Activated naive CD4-positive, alpha-beta T cell treated with anti-CD3 and anti-CD28 coated beads, Interleukin-2, amount 10 ng/mL, durations not matched to agents 7 days and 5 days (primary cell): ENCODE measurements at regions of chr4 and their contacts with region 1.

Region 1: GRCh38 chr4:15956179-15956850 is 6.7 kb downstream of the FGFBP2 start:
- DNase-seq: peak; percentile 90
- H3K4me3 Mint-ChIP-seq: no peak overlapping the region
- H3K27ac Mint-ChIP-seq: no peak overlapping the region
- H3K4me1 Mint-ChIP-seq: peaks cover 3% of the 10 kb centered on the region
- H3K27me3 Mint-ChIP-seq: peaks cover 18% of the 10 kb centered on the region

Region 2: GRCh38 chr4:15231265-15232091 is 724.8 kb before region 1 on chr4:
- CTCF ChIA-PET with region 1: interaction called, 10 read pairs
- DNase-seq: peak; percentile 83
- H3K4me3 Mint-ChIP-seq: no peak overlapping the region
- H3K27ac Mint-ChIP-seq: no peak overlapping the region
- H3K4me1 Mint-ChIP-seq: peaks cover 33% of the 10 kb centered on the region
- H3K27me3 Mint-ChIP-seq: no peaks in the 10 kb centered on the region

Region 3: GRCh38 chr4:15479089-15479912 is 477.0 kb before region 1 on chr4:
- CTCF ChIA-PET with region 1: interaction called, 13 read pairs
- DNase-seq: no peak
- H3K4me3 Mint-ChIP-seq: no peak overlapping the region
- H3K27ac Mint-ChIP-seq: no peak overlapping the region
- H3K4me1 Mint-ChIP-seq: no peaks in the 10 kb centered on the region
- H3K27me3 Mint-ChIP-seq: peaks cover 3% of the 10 kb centered on the region

Region 4: GRCh38 chr4:15649914-15650545 is 306.3 kb before region 1 on chr4:
- CTCF ChIA-PET with region 1: interaction called, 13 read pairs
- DNase-seq: peak; percentile 75
- H3K4me3 Mint-ChIP-seq: no peak overlapping the region
- H3K27ac Mint-ChIP-seq: peak overlapping the region; percentile 24
- H3K4me1 Mint-ChIP-seq: peaks cover 59% of the 10 kb centered on the region
- H3K27me3 Mint-ChIP-seq: no peaks in the 10 kb centered on the region

Region 5: GRCh38 chr4:15729910-15730533 is 226.3 kb before region 1 on chr4:
- CTCF ChIA-PET with region 1: interaction called, 12 read pairs
- DNase-seq: peak; percentile 46
- H3K4me3 Mint-ChIP-seq: no peak overlapping the region
- H3K27ac Mint-ChIP-seq: no peak overlapping the region
- H3K4me1 Mint-ChIP-seq: peaks cover 30% of the 10 kb centered on the region
- H3K27me3 Mint-ChIP-seq: peaks cover under 1% of the 10 kb centered on the region

Region 6: GRCh38 chr4:15805583-15806517 is 150.5 kb before region 1 on chr4:
- CTCF ChIA-PET with region 1: interaction called, 10 read pairs
- DNase-seq: peak; percentile 55
- H3K4me3 Mint-ChIP-seq: no peak overlapping the region
- H3K27ac Mint-ChIP-seq: no peak overlapping the region
- H3K4me1 Mint-ChIP-seq: peaks cover 49% of the 10 kb centered on the region
- H3K27me3 Mint-ChIP-seq: no peaks in the 10 kb centered on the region

Region 7: DNA sequence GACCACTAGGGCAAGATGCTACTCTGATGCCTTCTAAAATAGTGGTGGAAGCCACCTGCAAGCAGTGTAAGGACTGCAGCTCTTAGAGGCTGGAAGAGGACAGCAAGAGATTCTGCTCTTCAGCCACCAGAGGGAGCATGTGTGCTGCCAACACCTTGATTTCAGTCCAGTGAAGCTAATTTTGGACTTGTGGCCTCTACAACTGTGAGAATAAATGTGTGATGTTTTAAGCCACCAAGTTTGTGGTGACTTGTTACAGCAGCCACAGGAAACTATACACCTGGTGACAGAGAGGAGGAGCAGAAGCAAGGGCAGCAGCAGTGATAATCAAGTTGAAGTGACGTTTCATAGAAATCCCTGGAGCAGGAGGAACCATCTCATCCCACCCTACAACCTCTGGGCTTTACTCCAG is 73.6 kb before region 1 on chr4:
- CTCF ChIA-PET with region 1: interaction called, 101 read pairs
- DNase-seq: peak; percentile 62
- H3K4me3 Mint-ChIP-seq: no peak overlapping the region
- H3K27ac Mint-ChIP-seq: no peak overlapping the region
- H3K4me1 Mint-ChIP-seq: no peaks in the 10 kb centered on the region
- H3K27me3 Mint-ChIP-seq: peaks cover 19% of the 10 kb centered on the region

Region 8: DNA sequence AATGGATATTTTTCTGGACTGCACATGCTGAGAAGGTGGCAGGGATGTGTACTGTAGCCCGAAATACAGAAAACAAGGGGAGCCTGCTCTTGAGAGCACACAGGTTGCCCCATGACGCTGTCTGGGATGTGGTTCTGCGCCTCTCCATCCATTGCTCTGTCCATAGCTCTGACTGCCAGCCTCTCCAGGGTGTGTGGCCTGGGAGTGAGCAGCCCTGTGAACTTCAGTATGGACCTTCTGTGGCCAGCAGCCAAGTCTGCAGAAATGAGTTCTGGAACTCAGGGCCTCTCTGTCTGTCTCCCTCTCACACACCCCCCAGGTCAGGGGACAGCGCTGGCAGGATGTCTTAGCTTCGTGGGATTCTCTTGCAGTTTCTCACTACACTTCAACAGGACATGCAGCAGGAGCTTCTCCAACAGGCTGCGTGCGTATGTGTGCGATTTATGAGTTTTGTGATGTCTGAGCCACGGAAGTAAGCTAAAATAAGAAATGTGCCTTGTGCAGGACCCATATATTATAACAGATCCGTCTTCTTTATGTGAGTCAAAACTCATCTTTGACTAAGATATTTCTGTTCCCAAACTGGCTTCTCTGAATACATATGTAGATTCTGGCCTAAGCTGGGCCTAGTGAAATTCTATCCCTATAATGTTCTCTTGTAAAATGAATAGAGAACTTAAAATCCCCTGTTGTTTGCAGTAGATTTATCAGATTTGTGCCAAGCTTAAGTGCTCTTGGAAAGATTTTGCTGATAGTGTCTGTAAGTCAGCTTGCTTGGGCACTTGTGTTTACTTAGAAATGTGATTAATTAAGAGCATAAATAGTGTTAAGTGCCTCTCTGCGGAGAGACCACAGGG is 87.6 kb after region 1 on chr4:
- CTCF ChIA-PET with region 1: no interaction called
- DNase-seq: no peak
- H3K4me3 Mint-ChIP-seq: no peak overlapping the region
- H3K27ac Mint-ChIP-seq: no peak overlapping the region
- H3K4me1 Mint-ChIP-seq: no peaks in the 10 kb centered on the region
- H3K27me3 Mint-ChIP-seq: peaks cover 8% of the 10 kb centered on the region